GM13977 (cell line): ENCODE measurements at regions of chr1 and their contacts with region 1.

Region 1: GRCh38 chr1:154524881-154525280 is 22.7 kb upstream of the SHE start:
- DNase-seq: no peak
- CTCF ChIP-seq: no peak

Region 2: DNA sequence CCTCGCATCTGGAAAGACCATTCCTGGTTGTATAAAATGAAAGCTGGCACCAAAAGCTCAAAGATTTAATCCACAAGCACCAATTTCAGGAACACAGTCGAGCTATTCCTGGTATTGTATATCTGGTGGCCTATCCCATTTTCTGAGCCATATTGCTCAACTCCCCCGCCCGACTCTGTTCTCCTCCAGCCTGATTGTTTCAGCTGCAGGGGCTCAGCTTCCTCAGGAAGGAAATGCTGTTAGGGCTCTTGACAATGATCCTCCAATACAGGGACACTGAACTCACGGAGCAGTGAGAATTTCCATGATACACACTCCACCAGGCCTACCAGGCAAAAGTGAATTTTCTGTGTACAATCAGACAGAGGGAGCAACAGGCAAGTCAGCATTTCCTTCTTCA is 39.8 kb before region 1 on chr1:
- in situ Hi-C with region 1: loop called (anchors 5 kb)
- DNase-seq: no peak
- CTCF ChIP-seq: no peak